AG04449 (cell line): ENCODE measurements at regions of chr7 and their contacts with region 1.

Region 1: GRCh38 chr7:51162724-51163329 is 153.8 kb downstream of the COBL start:
- DNase-seq: peak; percentile 47
- H3K4me3 ChIP-seq: no peak overlapping the region
- CTCF ChIP-seq: peak; percentile 88

Region 2: DNA sequence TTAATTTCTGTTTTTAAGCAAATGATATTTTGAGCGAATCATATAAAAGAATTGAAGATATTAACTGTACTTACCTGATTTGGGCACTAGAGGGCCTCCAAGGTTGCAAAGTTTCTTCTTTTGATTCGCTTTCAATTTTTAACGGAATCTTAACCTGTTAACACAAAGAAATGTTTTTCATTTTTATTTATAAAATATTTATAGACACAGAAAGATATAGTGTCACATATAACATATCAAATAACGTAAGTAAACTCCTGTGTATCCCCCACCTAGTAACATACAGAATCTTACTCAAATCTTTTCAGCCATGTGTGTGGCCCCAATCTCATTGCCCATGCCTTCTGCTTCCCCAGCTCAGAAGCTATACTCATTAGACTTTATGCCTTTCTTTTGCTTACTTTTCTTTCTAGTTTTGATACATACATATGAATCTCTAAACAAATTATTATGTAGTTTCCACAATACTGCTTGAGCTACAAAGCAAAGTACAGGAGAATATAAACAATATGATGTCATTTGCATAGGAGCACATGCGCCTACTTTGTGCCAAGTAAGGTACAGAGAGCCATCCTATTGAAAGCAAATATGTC is 1020.3 kb before region 1 on chr7:
- CTCF ChIA-PET with region 1: interaction called, 83 read pairs
- POLR2A ChIA-PET with region 1: no interaction called
- DNase-seq: no peak
- H3K4me3 ChIP-seq: no peak overlapping the region
- CTCF ChIP-seq: peak; percentile 52

Region 3: DNA sequence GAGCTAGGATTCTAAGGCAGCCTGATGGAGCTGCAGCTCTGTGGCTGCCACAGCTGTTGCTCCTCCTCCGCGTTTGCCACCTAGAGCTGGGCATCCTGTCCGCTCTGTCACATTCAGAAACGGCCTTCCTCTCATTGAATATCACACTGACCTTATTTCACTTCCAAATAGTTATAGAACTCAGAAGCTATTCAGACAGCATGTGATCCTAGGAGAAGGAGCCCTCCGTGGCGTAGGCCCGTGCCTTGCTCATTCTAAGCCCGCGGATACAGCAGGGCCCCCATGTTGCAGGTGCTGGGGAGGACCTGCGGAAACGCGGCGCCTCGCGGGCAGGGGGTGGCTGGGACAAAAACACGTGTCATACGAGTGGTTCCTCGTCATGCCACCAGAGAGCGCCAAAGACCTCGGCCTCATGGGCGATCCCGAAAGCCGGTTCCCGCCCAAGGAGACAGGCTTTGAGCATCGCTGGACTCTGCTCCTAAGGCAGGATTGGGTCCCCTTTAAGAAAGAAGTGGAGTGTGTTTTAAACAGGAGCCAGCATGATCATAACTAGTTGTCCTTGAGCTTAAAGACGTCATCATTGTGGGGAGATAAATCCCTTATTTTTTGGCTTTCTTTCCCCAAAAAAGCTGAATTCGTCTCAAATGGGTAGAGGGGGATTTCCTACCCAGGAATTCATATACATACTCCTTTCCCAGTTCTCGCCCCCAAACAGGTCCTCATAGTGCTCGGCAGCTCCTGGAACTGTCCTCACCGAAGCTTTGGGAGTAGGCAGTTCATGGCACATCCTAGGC is 694.8 kb before region 1 on chr7:
- CTCF ChIA-PET with region 1: interaction called, 236 read pairs
- POLR2A ChIA-PET with region 1: no interaction called
- DNase-seq: no peak
- H3K4me3 ChIP-seq: 0 out of 2 replicates have a peak overlapping the region, but pooled peaks have one; percentile 15
- CTCF ChIP-seq: peak; percentile 90

Region 4: GRCh38 chr7:50632561-50633413 is 530.0 kb before region 1 on chr7:
- CTCF ChIA-PET with region 1: interaction called, 10 read pairs
- POLR2A ChIA-PET with region 1: no interaction called
- DNase-seq: no peak
- H3K4me3 ChIP-seq: no peak overlapping the region
- CTCF ChIP-seq: peak; percentile 72

Region 5: DNA sequence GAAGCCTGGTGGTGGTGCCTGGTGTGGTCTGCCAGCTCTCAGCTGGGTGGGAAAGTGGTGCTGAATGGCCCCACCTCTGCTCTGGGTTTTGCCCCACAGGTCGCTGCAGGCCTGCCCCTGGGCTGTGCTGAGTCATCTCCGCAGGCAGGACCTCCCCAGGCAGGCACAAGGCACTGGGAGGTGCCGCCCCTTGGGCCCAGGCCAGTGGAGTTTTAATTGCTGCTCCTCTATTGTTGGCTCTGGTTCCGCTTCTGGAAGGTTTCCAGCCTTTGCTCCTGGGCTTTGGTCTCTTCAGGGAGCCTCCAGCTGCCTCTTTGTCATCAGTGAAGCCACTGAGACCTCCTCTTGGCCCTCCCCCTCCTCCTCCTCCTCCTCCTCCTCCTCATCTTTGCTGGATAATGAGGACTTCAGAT is 199.9 kb before region 1 on chr7:
- CTCF ChIA-PET with region 1: no interaction called
- POLR2A ChIA-PET with region 1: no interaction called
- DNase-seq: no peak
- H3K4me3 ChIP-seq: no peak overlapping the region
- CTCF ChIP-seq: no peak

Region 6: GRCh38 chr7:51175316-51175991 is 12.6 kb after region 1 on chr7:
- CTCF ChIA-PET with region 1: interaction called, 21 read pairs
- POLR2A ChIA-PET with region 1: no interaction called
- DNase-seq: no peak
- H3K4me3 ChIP-seq: no peak overlapping the region
- CTCF ChIP-seq: no peak

Region 7: GRCh38 chr7:51187941-51188340 is 25.1 kb after region 1 on chr7:
- CTCF ChIA-PET with region 1: interaction called, 21 read pairs
- POLR2A ChIA-PET with region 1: no interaction called
- DNase-seq: no peak
- H3K4me3 ChIP-seq: no peak overlapping the region
- CTCF ChIP-seq: no peak